CD14-positive monocyte (primary cell): ENCODE measurements at regions of chr17 and their contacts with region 1.

Region 1: DNA sequence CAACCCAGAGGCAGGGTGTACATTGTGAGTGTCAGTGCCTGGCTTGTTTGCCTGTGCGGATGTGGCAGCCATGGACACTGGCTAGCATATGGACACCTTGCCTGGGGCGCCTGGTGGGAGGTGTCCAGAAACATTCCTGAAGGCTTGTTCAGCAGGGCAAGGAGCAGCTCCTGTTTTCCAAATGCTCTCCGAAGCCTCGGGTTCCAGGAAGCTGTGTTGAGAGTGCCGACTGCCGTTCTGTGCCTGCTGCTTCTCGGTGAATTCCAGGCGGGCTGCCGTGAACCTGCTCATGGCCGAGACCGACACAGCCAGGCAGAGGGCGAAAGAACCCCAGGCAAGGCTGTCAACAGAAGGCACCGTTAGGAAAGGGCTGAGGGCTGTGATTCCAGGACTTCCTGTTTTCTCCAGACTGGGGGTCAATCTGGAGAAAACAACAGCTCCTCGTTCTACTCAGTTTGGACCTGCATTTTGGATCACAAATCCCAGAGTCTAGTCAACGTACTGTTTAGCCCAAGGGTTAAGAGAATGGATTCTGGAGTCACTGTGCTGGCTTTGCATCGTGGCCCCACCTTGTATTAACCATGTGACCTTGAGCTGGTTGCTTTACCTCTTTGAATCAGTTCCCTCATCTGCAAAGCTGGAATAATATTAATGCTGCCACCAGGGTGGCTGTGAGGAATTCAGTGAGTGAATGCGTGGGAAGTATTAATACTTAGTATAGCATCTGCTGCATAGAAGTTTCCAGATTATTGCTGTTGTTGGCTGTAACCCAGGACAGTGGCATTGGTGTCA is 11.1 kb upstream of the DHRS7C start:
- DNase-seq: no peak
- H3K4me3 ChIP-seq: no peak overlapping the region
- H3K4me3 Mint-ChIP-seq: no peak overlapping the region
- H3K27ac ChIP-seq: no peak overlapping the region
- H3K27ac Mint-ChIP-seq: no peak overlapping the region
- H3K4me1 ChIP-seq: no peaks in the 10 kb centered on the region
- H3K4me1 Mint-ChIP-seq: no peaks in the 10 kb centered on the region
- H3K27me3 ChIP-seq: peaks cover 0 to 2% of the 10 kb centered on the region in 2 donors
- H3K27me3 Mint-ChIP-seq: peaks cover 4 to 5% (median 5%) of the 10 kb centered on the region in 3 donors
- CTCF ChIP-seq: no peak

Region 2: DNA sequence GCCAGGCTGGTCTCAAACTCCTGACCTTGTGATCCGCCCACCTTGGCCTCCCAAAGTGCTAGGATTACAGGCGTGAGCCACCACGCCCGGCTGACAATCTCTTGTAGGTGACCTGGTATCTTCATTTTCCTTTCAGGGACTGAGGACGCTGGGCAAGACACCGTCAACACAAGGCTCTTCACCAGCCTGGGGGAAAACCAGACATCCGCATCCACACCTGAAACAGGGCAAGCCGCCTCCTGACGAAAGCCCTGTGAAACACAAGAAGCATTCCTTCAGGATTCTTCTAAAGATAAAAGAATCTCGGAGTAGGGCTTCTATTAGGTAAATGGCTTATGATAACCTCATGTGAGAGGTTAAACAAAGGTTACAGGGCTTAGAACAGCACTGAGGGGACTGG is 59.4 kb before region 1 on chr17:
- intact Hi-C with region 1: loop called in 1 of 2 experiments (anchors 10 kb)
- DNase-seq: no peak
- H3K4me3 ChIP-seq: no peak overlapping the region
- H3K4me3 Mint-ChIP-seq: no peak overlapping the region
- H3K27ac ChIP-seq: no peak overlapping the region
- H3K27ac Mint-ChIP-seq: no peak overlapping the region
- H3K4me1 ChIP-seq: no peaks in the 10 kb centered on the region
- H3K4me1 Mint-ChIP-seq: no peaks in the 10 kb centered on the region
- H3K27me3 ChIP-seq: no peaks in the 10 kb centered on the region
- H3K27me3 Mint-ChIP-seq: peaks cover 6 to 14% (median 13%) of the 10 kb centered on the region in 3 donors
- CTCF ChIP-seq: no peak

Region 3: DNA sequence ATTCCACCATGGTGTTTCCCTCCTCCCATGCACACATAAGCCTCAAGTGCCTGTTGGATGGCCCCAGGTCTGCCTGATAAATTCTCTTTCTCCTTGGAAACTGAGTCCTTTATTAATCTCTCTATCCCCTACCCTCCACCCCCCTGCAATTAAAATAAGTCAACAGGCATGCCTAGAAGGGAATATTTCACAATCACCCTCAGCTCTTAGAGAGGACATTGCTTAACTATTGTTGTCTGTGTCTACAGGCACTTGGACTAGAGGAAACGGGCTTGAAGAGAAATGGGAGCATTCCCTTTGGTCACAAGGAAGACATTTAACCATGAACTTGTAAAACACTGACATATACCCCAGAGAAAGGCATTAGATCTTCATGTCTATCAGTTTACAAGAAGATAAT is 63.1 kb after region 1 on chr17:
- intact Hi-C with region 1: no loop called
- DNase-seq: no peak
- H3K4me3 ChIP-seq: no peak overlapping the region
- H3K4me3 Mint-ChIP-seq: no peak overlapping the region
- H3K27ac ChIP-seq: no peak overlapping the region
- H3K27ac Mint-ChIP-seq: peak overlapping the region in 1 of 7 donors; percentile 31
- H3K4me1 ChIP-seq: peaks cover 0 to 4% of the 10 kb centered on the region in 2 donors
- H3K4me1 Mint-ChIP-seq: peaks cover 8% of the 10 kb centered on the region
- H3K27me3 ChIP-seq: no peaks in the 10 kb centered on the region
- H3K27me3 Mint-ChIP-seq: peaks cover 0 to 9% (median 2%) of the 10 kb centered on the region in 3 donors
- CTCF ChIP-seq: no peak